ENCODE measurements at regions of chr3 and their contacts with region 1.

Region 1: DNA sequence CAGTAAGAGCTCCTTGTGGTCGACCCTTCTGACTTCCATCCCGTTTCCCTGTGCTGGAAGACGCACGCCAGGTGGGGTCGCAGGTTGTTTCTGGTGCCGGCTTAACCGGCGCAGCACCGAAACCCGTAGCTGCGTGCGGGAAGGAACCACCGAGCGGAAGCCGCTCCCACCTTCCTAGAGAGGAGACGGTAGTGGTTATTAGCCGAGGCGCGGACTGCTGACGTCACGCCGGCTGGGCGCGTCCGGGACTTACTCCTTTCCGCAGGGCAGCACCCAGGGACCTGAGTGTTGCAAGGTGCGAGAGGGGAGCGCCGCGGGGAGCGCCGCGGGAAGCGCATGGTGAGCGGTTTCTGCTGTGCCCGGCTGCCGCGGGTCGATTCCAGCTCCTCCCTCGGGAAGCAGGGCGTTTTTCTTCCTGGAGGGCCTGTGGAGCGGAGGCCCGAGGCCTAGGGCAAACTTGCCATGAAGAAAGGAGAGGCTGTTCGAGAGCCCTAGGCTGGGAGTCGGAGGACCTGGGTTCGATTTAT is at the start of gene ZNF501:
- DNase-seq: peak; percentile 90
- ATAC-seq: peak; percentile 99
- H3K4me3 ChIP-seq: peak within 1 kb of the TSS; percentile 66 to 81 (median 76)
- H3K27ac ChIP-seq: peak within 1 kb of the TSS; percentile 54
- H3K4me1 ChIP-seq: peaks cover 16% of the 10 kb centered on the region
- H3K27me3 ChIP-seq: no peaks in the 10 kb centered on the region; a peak in 1 of 5 replicates
- CTCF ChIP-seq: peak; percentile 14; the same call in 1 of the 2 replicates
- EP300 ChIP-seq: no peak
- POLR2A ChIP-seq: peak; percentile 68 to 78; a peak in 3 of 4 replicates
- RAD21 ChIP-seq: no peak
- total RNA-seq, gene ZNF501: 2.8 and 4.1 TPM in 2 replicates

Region 2: DNA sequence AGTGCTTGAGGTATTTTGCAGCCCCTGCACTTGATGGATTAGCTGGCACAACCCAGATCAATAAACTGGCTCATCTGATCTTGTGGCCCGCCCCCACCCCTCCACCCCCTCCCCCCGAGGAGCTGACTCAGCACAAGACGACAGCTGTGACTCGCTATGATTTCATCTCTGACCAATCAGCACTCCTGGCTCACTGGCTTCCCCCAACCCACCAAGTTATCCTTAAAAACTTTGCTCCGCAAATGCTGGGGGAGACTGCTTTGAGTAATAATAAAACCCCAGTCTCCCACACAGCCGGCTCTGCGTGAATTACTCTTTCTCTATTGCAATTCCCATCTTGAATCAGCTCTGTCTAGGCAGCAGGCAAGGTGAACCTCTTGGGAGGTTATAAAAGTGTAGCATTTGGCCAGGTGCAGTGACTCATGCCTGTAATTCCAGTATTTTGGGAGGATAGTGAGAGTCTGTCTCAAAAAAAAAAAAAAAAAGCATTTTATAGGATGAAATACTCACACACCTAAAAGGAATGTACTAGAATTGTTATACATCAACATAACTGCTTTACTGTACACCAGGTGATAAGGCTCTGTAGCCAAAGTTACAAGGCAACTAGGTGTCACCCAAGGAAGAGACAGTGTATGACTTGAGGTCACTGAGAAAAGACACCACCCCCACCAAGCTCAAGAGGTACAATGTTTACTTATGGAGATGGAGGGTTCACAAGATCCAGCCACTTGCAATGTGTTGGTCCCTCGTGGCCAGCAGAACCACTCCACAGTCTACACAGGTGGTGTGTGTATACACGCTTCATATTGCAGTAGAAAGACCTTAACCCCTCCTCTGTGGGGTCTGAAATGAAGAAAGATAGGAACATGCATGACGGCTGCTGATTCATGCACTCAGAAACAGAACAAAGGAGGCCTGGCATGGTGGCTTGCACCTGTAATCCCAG is 260.6 kb before region 1 on chr3:
- CTCF ChIA-PET with region 1: no interaction called
- POLR2A ChIA-PET with region 1: no interaction called
- in situ Hi-C with region 1: no loop called
- intact Hi-C with region 1: no loop called
- DNase-seq: no peak
- ATAC-seq: no peak
- H3K4me3 ChIP-seq: no peak overlapping the region
- H3K27ac ChIP-seq: no peak overlapping the region
- H3K4me1 ChIP-seq: peaks cover 26% of the 10 kb centered on the region
- H3K27me3 ChIP-seq: no peaks in the 10 kb centered on the region
- CTCF ChIP-seq: no peak
- EP300 ChIP-seq: no peak
- POLR2A ChIP-seq: no peak
- RAD21 ChIP-seq: no peak

Region 3: DNA sequence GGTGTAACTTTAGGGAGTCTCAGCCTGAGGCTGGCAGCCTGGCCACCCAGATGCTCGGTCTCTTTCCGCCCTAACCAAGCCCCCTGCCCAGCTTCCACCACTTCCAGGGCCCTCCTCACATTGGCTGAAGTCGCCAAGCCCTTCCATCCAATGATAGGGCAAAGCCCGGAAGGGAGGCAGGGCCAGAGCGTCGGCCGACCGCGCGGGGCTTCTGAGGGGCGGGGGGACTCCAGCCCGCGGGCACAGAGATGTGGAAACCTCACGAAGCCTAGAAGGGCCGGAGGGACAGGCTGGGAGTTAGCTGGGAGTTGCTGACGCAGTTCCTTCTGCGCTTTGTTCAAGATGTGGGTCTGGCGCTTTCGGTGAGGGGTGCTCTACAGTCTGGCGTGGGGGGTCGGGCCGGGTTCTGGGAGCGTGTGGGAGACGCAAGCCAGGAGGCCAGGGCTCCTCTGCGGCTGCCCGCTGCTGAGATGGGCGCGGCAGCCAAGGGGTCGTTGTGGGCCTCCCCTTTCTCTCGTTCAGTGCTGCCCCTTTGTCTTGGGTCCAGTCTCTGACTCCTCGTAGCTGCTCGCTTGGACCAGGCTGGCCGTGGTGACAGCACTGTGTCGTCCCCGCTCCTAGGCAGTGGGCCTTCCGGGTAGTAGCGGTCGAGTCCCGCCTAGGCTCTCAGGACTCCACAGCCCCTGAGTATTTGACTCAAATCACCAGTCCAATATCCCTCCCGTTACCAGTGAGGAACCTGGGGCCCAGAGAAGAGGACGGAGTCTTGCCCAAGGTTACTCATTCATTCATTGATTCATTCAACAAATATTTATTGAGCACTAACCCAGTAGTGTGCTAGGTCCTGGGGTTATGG is 144.6 kb before region 1 on chr3 and contains the start of gene ZNF660:
- CTCF ChIA-PET with region 1: no interaction called
- POLR2A ChIA-PET with region 1: interaction called, 12 read pairs
- in situ Hi-C with region 1: no loop called
- intact Hi-C with region 1: no loop called
- DNase-seq: peak; percentile 57
- ATAC-seq: peak; percentile 96
- H3K4me3 ChIP-seq: peak within 1 kb of the TSS; percentile 51 to 80 (median 77); a peak in 5 of 6 replicates
- H3K27ac ChIP-seq: peak within 1 kb of the TSS; percentile 65
- H3K4me1 ChIP-seq: peaks cover 14% of the 10 kb centered on the region
- H3K27me3 ChIP-seq: no peaks in the 10 kb centered on the region
- CTCF ChIP-seq: no peak
- EP300 ChIP-seq: no peak
- POLR2A ChIP-seq: peak; percentile 59 to 69
- RAD21 ChIP-seq: no peak
- total RNA-seq, gene ZNF660: 3.3 and 6.1 TPM in 2 replicates

Region 4: GRCh38 chr3:44761424-44762169 is 32.1 kb after region 1 on chr3 and contains the starts of genes KIAA1143 and KIF15:
- CTCF ChIA-PET with region 1: no interaction called
- POLR2A ChIA-PET with region 1: interaction called, 26 read pairs
- in situ Hi-C with region 1: no loop called
- intact Hi-C with region 1: loop called (anchors 2 kb)
- DNase-seq: peak; percentile 89
- ATAC-seq: peak; percentile 90
- H3K4me3 ChIP-seq: peak within 1 kb of the TSS; percentile 61 to 94 (median 88)
- H3K27ac ChIP-seq: peak within 1 kb of the TSS; percentile 79
- H3K4me1 ChIP-seq: peaks cover 40% of the 10 kb centered on the region
- H3K27me3 ChIP-seq: no peaks in the 10 kb centered on the region; a peak in 2 of 5 replicates
- CTCF ChIP-seq: peak; percentile 43; the same call in 1 of the 2 replicates
- EP300 ChIP-seq: peak; percentile 8 to 37; a peak in 2 of 4 replicates
- POLR2A ChIP-seq: peak; percentile 73 to 86; a peak in 3 of 4 replicates
- RAD21 ChIP-seq: 0 out of 2 replicates have a peak, but pooled peaks have one; percentile 22
- total RNA-seq, gene KIAA1143: 27.2 and 49.0 TPM in 2 replicates
- total RNA-seq, gene KIF15: 33.8 and 55.1 TPM in 2 replicates